CD4-positive, alpha-beta memory T cell (primary cell): ENCODE measurements at regions of chr17 and their contacts with region 1.

Region 1: DNA sequence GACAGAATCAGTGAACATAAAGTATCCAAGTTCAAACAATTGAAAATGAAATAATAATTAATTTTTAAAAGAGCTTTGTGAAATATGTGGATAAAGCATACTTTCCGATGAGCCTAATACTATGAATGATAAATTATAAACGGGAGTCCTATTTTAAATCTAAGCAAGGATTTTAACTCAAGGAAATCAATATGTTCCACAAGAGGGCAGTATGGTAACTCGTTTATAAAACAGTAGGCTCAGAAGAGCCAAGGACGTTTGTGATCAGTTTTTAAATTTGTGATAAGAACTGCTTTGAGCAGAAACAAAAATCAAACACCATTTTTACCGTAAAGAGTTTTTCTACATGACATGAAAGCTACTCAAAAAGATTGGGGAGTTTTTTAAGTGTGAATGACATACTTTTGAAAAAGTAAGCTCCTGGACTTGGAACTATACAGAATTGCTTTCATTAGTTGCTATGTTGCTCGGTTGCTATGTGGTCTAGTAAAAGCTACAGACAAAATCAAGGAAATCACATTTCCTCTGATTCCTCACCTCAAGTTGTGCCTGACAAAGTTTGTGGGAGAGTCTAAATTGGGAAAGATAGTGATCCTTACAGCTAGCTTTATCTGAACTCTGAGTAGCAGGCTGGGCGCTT is 11.8 kb upstream of the TEKT1 start:
- DNase-seq: peak in 4 of 5 donors; percentile 37 to 45 (median 38)
- H3K4me3 ChIP-seq: no peak overlapping the region
- H3K4me3 Mint-ChIP-seq: no peak overlapping the region
- H3K27ac ChIP-seq: no peak overlapping the region
- H3K27ac Mint-ChIP-seq: no peak overlapping the region
- H3K4me1 ChIP-seq: peaks cover 10% of the 10 kb centered on the region
- H3K4me1 Mint-ChIP-seq: peaks cover 0 to 6% (median 5%) of the 10 kb centered on the region in 4 donors
- H3K27me3 ChIP-seq: no peaks in the 10 kb centered on the region
- H3K27me3 Mint-ChIP-seq: peaks cover 16 to 31% of the 10 kb centered on the region in 2 donors

Region 2: DNA sequence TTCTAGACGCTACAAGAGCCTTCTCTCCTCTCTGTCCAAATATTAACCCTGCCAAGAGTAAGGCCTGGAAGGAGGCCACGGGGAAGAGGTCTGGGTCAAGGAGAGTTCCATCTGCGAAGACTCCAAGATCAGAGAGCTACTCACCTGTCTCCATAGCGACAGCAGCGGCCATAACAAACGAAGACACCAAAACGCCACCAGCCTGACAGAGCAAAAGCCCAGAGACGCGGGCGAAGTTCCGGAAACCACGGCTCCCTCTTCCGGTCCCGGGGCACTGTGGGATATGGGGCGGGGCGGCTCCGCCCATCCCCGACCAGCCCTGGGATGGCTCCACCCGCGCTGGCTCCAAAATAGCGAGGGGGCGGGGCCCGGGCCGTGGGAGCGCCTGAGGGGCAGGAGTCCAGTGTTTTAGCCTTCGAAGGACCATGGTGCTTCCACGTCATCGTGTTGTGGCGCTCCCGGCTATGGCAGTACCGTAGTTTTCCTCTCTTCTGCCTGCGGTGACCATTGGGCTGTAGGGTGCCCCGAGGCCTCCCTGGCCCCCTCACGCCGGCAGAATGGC is 191.9 kb before region 1 on chr17 and contains the starts of genes C17orf100 and MED31:
- CTCF ChIA-PET with region 1: no interaction called
- POLR2A ChIA-PET with region 1: no interaction called
- intact Hi-C with region 1: no loop called
- DNase-seq: peak; percentile 93 to 96 (median 95)
- H3K4me3 ChIP-seq: peak within 1 kb of the TSS; percentile 80 to 83
- H3K4me3 Mint-ChIP-seq: peak within 1 kb of the TSS; percentile 96 to 100 (median 99)
- H3K27ac ChIP-seq: peak within 1 kb of the TSS; percentile 99
- H3K27ac Mint-ChIP-seq: peak within 1 kb of the TSS; percentile 99 to 100 (median 100)
- H3K4me1 ChIP-seq: peaks cover 50% of the 10 kb centered on the region
- H3K4me1 Mint-ChIP-seq: peaks cover 36 to 82% (median 61%) of the 10 kb centered on the region in 4 donors
- H3K27me3 ChIP-seq: no peaks in the 10 kb centered on the region
- H3K27me3 Mint-ChIP-seq: no peaks in the 10 kb centered on the region
- total RNA-seq, gene C17orf100: 4.0 to 4.3 TPM
- total RNA-seq, gene MED31: 30.8 to 35.8 TPM

Region 3: DNA sequence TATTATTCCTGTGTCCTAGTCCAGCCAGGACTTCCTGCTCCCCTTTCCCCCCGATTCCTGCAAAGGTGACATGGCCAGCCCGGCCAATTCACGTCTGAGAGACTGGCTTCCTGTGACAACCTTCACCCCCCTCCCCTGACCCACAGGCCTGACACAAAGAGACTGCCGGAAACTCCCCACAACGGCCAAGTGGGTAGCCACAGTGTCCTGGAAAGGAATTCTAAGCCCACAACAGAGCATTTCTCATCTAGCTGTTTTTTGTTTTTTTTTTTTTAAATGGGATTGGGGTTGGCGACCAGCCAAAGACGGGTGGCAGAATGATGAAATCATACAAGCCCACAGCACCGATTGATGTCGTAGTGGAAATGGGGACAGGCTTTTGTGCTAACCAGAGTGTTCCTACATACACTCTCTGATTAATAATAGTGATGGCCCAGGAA is 90.3 kb before region 1 on chr17:
- CTCF ChIA-PET with region 1: interaction called, 10 read pairs
- POLR2A ChIA-PET with region 1: no interaction called
- intact Hi-C with region 1: no loop called
- DNase-seq: peak; percentile 42 to 70 (median 63)
- H3K4me3 ChIP-seq: no peak overlapping the region
- H3K4me3 Mint-ChIP-seq: peak overlapping the region; percentile 4 to 75 (median 62)
- H3K27ac ChIP-seq: no peak overlapping the region
- H3K27ac Mint-ChIP-seq: peak overlapping the region; percentile 82 to 95 (median 87)
- H3K4me1 ChIP-seq: peaks cover 42% of the 10 kb centered on the region
- H3K4me1 Mint-ChIP-seq: peaks cover 31 to 57% (median 47%) of the 10 kb centered on the region in 4 donors
- H3K27me3 ChIP-seq: no peaks in the 10 kb centered on the region
- H3K27me3 Mint-ChIP-seq: no peaks in the 10 kb centered on the region

Region 4: DNA sequence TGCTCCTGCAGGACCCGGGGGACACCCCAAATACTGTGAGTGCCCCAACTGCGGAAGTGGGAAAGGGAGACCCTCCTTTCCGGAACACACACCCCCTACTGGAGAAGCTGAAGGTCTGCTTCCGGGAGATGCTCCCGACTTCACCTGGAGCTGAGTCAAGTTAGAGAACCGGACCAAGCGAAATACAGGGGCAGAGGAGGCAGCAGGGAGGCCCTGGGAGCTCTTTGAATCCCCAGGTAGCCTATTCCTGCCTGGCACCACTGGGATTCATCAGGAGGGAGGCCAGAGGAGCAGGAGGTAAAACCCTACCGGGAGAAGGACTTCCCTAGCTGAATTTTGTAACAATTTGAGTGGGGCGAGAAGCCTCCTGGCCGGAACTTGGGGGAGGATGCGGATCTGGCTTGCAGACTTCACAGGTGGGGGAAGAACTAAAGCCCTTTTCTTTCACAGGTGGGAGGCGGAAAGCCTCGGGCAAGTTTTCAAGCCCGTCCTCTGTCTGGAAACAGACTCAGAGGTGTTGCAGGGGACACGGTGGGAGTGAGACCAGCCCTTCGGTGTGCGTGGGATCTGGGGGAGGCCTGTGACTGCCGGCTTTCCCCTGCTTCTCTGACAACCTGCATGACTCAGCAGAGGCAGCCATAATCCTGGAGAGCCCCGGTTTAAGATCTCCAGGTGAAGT is 10.5 kb after region 1 on chr17:
- CTCF ChIA-PET with region 1: interaction called, 16 read pairs
- POLR2A ChIA-PET with region 1: no interaction called
- intact Hi-C with region 1: no loop called
- DNase-seq: peak in 1 of 5 donors; percentile 10
- H3K4me3 ChIP-seq: no peak overlapping the region
- H3K4me3 Mint-ChIP-seq: peak overlapping the region in 7 of 8 donors; percentile 35 to 73 (median 65)
- H3K27ac ChIP-seq: peak overlapping the region; percentile 17
- H3K27ac Mint-ChIP-seq: peak overlapping the region in 3 of 7 donors; percentile 33 to 50 (median 45)
- H3K4me1 ChIP-seq: no peaks in the 10 kb centered on the region
- H3K4me1 Mint-ChIP-seq: peaks cover 0 to 8% (median 3%) of the 10 kb centered on the region in 4 donors
- H3K27me3 ChIP-seq: no peaks in the 10 kb centered on the region
- H3K27me3 Mint-ChIP-seq: peaks cover 11 to 19% of the 10 kb centered on the region in 2 donors

Region 5: GRCh38 chr17:7021993-7022778 is 178.8 kb after region 1 on chr17:
- CTCF ChIA-PET with region 1: interaction called, 18 read pairs
- POLR2A ChIA-PET with region 1: no interaction called
- intact Hi-C with region 1: loop called (anchors 1 kb)
- DNase-seq: peak; percentile 73 to 79 (median 74)
- H3K4me3 ChIP-seq: peak overlapping the region; percentile 6 to 37
- H3K4me3 Mint-ChIP-seq: peak overlapping the region; percentile 63 to 88 (median 76)
- H3K27ac ChIP-seq: no peak overlapping the region
- H3K27ac Mint-ChIP-seq: peak overlapping the region; percentile 81 to 97 (median 91)
- H3K4me1 ChIP-seq: peaks cover 42% of the 10 kb centered on the region
- H3K4me1 Mint-ChIP-seq: peaks cover 21 to 60% (median 38%) of the 10 kb centered on the region in 4 donors
- H3K27me3 ChIP-seq: no peaks in the 10 kb centered on the region
- H3K27me3 Mint-ChIP-seq: peaks cover 0 to 3% of the 10 kb centered on the region in 2 donors